ENCODE measurements at regions of chr16 and their contacts with region 1.

Region 1: DNA sequence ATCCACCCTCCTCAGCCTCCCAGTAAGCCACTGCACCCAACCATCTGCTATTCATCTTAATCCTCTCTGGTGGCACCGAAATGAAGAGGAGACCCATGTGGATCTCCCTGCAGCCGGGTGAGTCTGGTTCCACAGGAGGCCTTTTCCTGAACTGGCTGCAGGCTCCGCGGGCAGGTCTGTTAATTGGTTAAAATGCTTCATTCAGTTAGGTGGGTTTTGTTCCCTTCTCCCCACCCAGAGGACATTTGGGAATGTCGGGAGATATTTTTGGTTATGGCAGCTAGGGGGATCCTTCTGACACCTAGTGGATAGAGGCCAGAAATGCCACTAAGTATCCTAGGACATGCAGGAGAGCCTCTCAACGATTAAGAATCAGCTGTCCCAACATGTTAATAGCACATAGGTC is 16.7 kb downstream of the C16orf54 start:
- H3K4me3 Mint-ChIP-seq: no peak overlapping the region
- H3K27ac Mint-ChIP-seq: no peak overlapping the region
- H3K4me1 Mint-ChIP-seq: peaks cover 14% of the 10 kb centered on the region
- H3K27me3 Mint-ChIP-seq: peaks cover 8% of the 10 kb centered on the region

Region 2: DNA sequence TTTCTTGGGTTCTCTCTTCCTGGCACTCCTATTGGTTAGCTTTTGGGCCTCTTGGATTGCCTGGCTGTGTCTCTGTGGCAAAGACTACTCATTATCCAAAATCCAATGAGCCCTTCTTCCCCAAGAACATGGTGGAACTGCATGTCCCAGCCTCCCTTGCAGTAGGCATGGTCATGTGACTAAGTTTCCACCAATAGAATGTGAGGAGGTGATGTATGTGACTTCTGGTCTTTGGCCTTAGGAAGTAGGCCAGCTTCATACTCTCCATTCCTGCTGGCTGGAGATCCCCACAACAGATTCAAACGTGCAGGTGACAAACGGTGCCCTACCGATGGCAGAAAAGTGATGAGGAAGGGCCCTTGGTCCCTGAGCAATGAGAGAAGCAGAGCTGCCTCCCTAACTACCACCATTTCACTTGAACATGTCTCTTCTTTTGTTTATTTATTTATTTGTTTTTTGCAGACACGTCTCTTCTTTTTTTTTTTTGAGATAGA is 83.4 kb before region 1 on chr16:
- intact Hi-C with region 1: loop called (anchors 10 kb)
- H3K4me3 Mint-ChIP-seq: peak overlapping the region; percentile 14
- H3K27ac Mint-ChIP-seq: peak overlapping the region; percentile 91
- H3K4me1 Mint-ChIP-seq: peaks cover 70% of the 10 kb centered on the region
- H3K27me3 Mint-ChIP-seq: peaks cover 2% of the 10 kb centered on the region

Region 3: GRCh38 chr16:29678691-29679267 is 50.3 kb before region 1 on chr16 and contains the start of gene QPRT:
- intact Hi-C with region 1: no loop called
- H3K4me3 Mint-ChIP-seq: peak within 1 kb of the TSS; percentile 92
- H3K27ac Mint-ChIP-seq: peak within 1 kb of the TSS; percentile 82
- H3K4me1 Mint-ChIP-seq: peaks cover 72% of the 10 kb centered on the region
- H3K27me3 Mint-ChIP-seq: no peaks in the 10 kb centered on the region

Region 4: GRCh38 chr16:29694384-29695195 is 34.5 kb before region 1 on chr16:
- intact Hi-C with region 1: loop called (anchors 5 kb)
- H3K4me3 Mint-ChIP-seq: no peak overlapping the region
- H3K27ac Mint-ChIP-seq: no peak overlapping the region
- H3K4me1 Mint-ChIP-seq: peaks cover 40% of the 10 kb centered on the region
- H3K27me3 Mint-ChIP-seq: peaks cover 6% of the 10 kb centered on the region

Region 5: DNA sequence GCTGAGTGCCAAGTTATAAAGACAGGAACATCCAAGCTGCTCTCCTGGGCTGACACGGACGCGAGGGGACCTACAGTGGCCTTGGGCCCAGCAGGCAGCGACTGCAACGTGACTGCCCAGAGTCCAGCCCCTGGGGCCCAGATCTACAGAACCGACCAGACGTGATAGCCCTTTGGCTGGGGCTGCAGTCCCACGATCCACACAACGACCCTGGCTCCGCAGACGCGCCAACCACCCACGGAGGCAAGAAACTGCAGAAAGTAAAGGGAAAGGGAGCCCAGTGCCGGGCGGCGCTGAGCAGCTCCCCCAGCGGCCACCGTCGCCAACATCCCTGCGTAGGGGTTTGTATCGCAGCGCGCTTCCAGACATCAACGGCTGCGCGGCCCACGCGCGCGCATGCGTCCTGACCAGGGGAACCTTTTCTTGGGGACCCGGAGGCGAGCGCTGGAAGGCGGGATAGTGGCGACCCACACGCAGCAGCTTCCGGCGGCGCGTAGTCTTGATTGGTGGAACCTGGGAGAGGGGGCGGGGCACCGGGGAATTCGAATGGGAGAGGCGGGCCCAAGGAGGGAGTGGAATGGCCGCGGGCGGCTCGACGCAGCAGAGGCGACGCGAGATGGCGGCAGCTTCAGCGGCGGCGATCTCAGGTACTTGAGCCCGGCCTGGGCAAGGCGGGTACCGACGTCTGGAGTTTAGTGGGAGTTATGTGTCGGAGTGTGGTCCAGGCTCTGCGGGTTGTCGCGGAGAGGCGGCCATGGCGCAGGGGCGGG is 61.2 kb after region 1 on chr16 and contains the start of gene KIF22:
- intact Hi-C with region 1: loop called (anchors 5 kb)
- H3K4me3 Mint-ChIP-seq: peak within 1 kb of the TSS; percentile 81
- H3K27ac Mint-ChIP-seq: peak within 1 kb of the TSS; percentile 77
- H3K4me1 Mint-ChIP-seq: peaks cover 49% of the 10 kb centered on the region
- H3K27me3 Mint-ChIP-seq: peaks cover 2% of the 10 kb centered on the region

Measured in dendritic cell treated with granulocyte-macrophage colony-stimulating factor and Interleukin-4, amounts not matched to agents 40 ng/mL and 50 ng/mL, for 4 days (primary cell).